ENCODE measurements at regions of chr11 and their contacts with region 1.

Region 1: GRCh38 chr11:9757809-9758636 is 94.1 kb downstream of the SWAP70 start:
- DNase-seq: peak; percentile 97
- ATAC-seq: peak; percentile 47
- H3K4me3 Mint-ChIP-seq: peak overlapping the region; percentile 86
- H3K27ac Mint-ChIP-seq: peak overlapping the region; percentile 89
- H3K4me1 Mint-ChIP-seq: peaks cover 51% of the 10 kb centered on the region
- H3K27me3 Mint-ChIP-seq: no peaks in the 10 kb centered on the region

Region 2: DNA sequence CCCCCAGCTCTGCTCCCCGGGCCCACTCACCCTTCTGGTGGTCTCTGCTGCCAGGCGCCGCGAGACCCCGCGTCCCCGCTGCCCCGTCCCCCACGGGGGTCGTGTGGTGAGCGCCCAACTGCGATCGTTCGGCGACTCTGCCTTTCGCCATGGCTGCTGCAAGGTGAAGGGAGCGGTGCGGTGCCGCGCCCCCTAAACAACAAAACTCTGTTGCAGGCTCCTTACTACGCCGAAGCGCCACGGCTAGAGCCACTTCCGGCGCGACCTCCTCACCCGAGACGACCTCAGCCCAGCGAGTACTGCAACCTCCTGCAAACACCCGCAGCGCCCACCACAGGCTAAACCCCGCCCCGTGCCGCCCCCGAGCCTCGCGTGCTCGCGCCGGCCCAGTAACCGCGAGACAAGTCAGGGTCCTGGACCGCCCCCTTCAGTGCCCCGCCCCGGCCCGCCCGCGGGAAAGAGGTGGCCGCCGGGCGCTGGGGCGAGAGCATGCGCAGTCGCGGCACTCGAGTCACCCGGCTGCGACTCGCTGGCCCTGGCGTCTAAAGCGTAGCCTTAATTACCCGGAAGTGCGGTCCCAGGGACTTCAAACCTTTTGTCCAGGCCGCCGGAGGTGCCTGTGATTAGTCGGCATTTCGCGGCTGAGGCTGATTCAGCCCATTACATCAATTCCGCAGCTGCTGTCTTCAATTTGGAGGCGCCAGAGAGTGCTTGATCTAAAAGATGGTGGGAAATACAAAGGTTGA is 443.6 kb before region 1 on chr11 and contains the start of gene TMEM41B:
- CTCF ChIA-PET with region 1: interaction called, 3 read pairs
- POLR2A ChIA-PET with region 1: no interaction called
- intact Hi-C with region 1: loop called in 1 of 2 experiments (anchors 1 kb)
- DNase-seq: peak; percentile 100
- ATAC-seq: peak; percentile 95
- H3K4me3 Mint-ChIP-seq: peak within 1 kb of the TSS; percentile 99
- H3K27ac Mint-ChIP-seq: peak within 1 kb of the TSS; percentile 99
- H3K4me1 Mint-ChIP-seq: peaks cover 36% of the 10 kb centered on the region
- H3K27me3 Mint-ChIP-seq: peaks cover 11% of the 10 kb centered on the region
- total RNA-seq, gene TMEM41B: 20.2 to 29.3 TPM

Region 3: GRCh38 chr11:9613118-9613829 is 144.7 kb before region 1 on chr11:
- CTCF ChIA-PET with region 1: interaction called, 8 read pairs
- POLR2A ChIA-PET with region 1: interaction called, 4 read pairs
- intact Hi-C with region 1: loop called (anchors 1 to 2 kb)
- DNase-seq: peak; percentile 94
- ATAC-seq: peak; percentile 64
- H3K4me3 Mint-ChIP-seq: peak overlapping the region; percentile 76
- H3K27ac Mint-ChIP-seq: peak overlapping the region; percentile 98
- H3K4me1 Mint-ChIP-seq: peaks cover 46% of the 10 kb centered on the region
- H3K27me3 Mint-ChIP-seq: no peaks in the 10 kb centered on the region

Region 4: GRCh38 chr11:9861860-9862725 is 104.1 kb after region 1 on chr11:
- CTCF ChIA-PET with region 1: interaction called, 6 read pairs
- POLR2A ChIA-PET with region 1: interaction called, 14 read pairs
- intact Hi-C with region 1: loop called (anchors 1 to 5 kb)
- DNase-seq: peak; percentile 71
- ATAC-seq: peak; percentile 74
- H3K4me3 Mint-ChIP-seq: no peak overlapping the region
- H3K27ac Mint-ChIP-seq: no peak overlapping the region
- H3K4me1 Mint-ChIP-seq: peaks cover 23% of the 10 kb centered on the region
- H3K27me3 Mint-ChIP-seq: no peaks in the 10 kb centered on the region

Region 5: GRCh38 chr11:10208131-10208575 is 450.1 kb after region 1 on chr11:
- CTCF ChIA-PET with region 1: no interaction called
- POLR2A ChIA-PET with region 1: no interaction called
- intact Hi-C with region 1: loop called in 1 of 2 experiments (anchors 1 kb)
- DNase-seq: peak; percentile 11
- ATAC-seq: peak; percentile 74
- H3K4me3 Mint-ChIP-seq: no peak overlapping the region
- H3K27ac Mint-ChIP-seq: no peak overlapping the region
- H3K4me1 Mint-ChIP-seq: no peaks in the 10 kb centered on the region
- H3K27me3 Mint-ChIP-seq: peaks cover 3% of the 10 kb centered on the region

Region 6: DNA sequence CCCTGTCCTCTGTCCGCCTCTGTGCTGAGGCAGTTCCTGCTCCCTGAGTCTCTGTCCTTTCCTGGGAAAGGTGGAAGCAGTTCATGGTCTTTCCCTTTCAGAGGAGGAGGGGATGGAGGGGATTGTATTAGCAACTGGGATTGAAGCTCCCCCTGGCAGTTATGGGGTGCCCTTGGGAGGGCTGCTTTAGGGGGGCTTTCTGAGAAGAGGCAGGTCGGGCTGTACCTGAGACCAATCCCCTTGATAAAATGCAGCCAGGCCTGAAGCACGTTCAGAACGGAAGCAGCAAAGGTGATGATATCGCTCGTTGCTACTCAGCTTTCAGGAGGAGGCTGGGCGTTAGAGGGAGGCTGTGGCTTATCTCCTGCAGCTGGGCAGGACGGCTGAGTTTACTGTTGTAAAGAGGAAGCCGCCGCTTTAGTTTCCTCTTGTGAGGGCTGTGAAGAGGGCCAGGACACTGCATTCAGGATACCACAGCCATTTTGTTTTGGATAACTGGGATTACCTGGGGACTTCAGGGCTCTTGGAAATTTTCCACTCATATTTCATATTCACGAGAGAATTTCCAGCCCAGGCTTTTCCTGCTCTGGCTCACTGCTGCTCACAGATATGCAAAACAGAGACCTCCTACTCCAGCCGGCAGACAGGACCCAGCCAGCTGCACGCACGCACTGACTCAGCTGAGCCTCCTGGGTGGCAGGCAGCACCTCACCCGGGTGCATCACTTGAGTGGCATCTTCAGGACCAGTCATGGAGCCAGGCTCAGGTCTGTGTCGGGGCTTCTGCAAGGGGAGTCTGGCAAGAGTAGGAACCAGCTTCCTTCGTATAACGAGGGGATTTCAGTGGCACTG is 697.8 kb after region 1 on chr11:
- CTCF ChIA-PET with region 1: no interaction called
- POLR2A ChIA-PET with region 1: interaction called, 3 read pairs
- intact Hi-C with region 1: loop called in 1 of 2 experiments (anchors 5 kb)
- DNase-seq: peak; percentile 91
- ATAC-seq: peak; percentile 80
- H3K4me3 Mint-ChIP-seq: peak overlapping the region; percentile 91
- H3K27ac Mint-ChIP-seq: peak overlapping the region; percentile 98
- H3K4me1 Mint-ChIP-seq: peaks cover 88% of the 10 kb centered on the region
- H3K27me3 Mint-ChIP-seq: no peaks in the 10 kb centered on the region

Measured in activated CD4-positive, alpha-beta T cell treated with anti-CD3 and anti-CD28 coated beads for 36 hours (primary cell).